GM12878 (cell line): ENCODE measurements at regions of chr5 and their contacts with region 1.

Region 1: GRCh38 chr5:10563945-10564837 is at the start of gene ANKRD33B:
- DNase-seq: no peak
- ATAC-seq: peak; percentile 64
- H3K4me3 ChIP-seq: peak within 1 kb of the TSS; percentile 87
- H3K27ac ChIP-seq: peak within 1 kb of the TSS; percentile 87
- H3K4me1 ChIP-seq: peaks cover 19% of the 10 kb centered on the region
- H3K27me3 ChIP-seq: no peaks in the 10 kb centered on the region
- CTCF ChIP-seq: no peak
- EP300 ChIP-seq: no peak
- POLR2A ChIP-seq: peak; percentile 93
- RAD21 ChIP-seq: peak; percentile 16; the same call in 1 of the 2 replicates
- polyA plus RNA-seq, gene ANKRD33B: 5.9 to 6.1 TPM

Region 2: DNA sequence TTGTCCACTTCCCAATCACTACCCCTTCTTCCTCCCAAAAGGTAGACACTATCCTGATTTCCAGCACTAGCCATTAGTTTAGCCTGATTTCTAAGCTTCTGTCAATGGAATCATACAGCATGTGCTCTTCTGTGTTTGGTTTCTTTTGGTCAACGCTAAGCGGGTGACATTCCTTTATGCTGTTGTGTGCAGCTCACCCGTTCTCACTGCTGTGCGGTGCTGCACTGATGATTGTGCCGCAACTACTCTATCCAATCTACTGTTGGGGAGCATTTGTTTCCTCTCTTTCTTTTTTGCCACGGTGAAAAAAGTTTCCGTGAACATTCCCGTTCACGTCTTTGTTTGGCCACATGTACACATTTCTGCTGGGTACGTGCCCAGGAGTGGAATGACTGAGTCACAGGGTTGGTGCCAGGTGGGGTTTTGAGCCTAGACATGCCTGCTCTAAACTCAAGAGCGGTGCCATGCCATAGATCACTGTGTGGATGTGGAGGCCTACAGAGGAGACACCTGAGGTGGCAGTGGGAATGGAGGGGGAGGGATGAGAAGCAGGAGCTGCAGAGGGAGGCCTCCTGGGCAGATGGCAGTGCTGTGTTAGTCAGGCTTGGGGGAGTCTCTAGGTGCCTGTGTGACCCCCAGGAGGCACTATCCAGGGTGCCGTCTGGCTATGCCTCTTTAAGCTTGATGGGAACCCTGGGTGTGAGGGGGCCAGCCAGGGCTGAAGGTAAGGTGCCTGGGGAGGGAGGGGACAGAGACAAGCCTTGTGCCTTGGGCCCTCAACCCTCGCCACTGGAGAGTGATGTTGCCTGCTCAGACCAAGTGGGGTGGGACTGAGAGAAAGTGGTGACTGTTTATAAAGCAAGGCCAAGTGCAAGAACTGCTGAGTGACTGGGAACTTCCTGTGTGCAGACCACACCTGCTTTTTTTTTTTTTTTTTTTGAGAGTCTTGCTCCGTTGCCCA is 11.7 kb before region 1 on chr5:
- CTCF ChIA-PET with region 1: interaction called, 3 read pairs
- POLR2A ChIA-PET with region 1: interaction called, 4 read pairs
- RAD21 ChIA-PET with region 1: interaction called, 4 read pairs
- SMC1A ChIA-PET with region 1: interaction called, 10 read pairs
- in situ Hi-C with region 1: no loop called
- intact Hi-C with region 1: no loop called
- DNase-seq: no peak
- ATAC-seq: peak; percentile 78
- H3K4me3 ChIP-seq: no peak overlapping the region
- H3K27ac ChIP-seq: no peak overlapping the region
- H3K4me1 ChIP-seq: peaks cover 19% of the 10 kb centered on the region
- H3K27me3 ChIP-seq: no peaks in the 10 kb centered on the region
- CTCF ChIP-seq: no peak
- EP300 ChIP-seq: no peak
- POLR2A ChIP-seq: peak; percentile 53; the same call in 1 of the 2 replicates
- RAD21 ChIP-seq: no peak

Region 3: GRCh38 chr5:10590226-10590999 is 26.2 kb after region 1 on chr5:
- CTCF ChIA-PET with region 1: interaction called, 4 read pairs
- POLR2A ChIA-PET with region 1: interaction called, 20 read pairs
- RAD21 ChIA-PET with region 1: interaction called, 8 read pairs
- SMC1A ChIA-PET with region 1: interaction called, 8 read pairs
- in situ Hi-C with region 1: no loop called
- intact Hi-C with region 1: no loop called
- DNase-seq: no peak
- ATAC-seq: peak; percentile 27; the same call in 2 of the 3 replicates
- H3K4me3 ChIP-seq: no peak overlapping the region
- H3K27ac ChIP-seq: peak overlapping the region; percentile 28
- H3K4me1 ChIP-seq: peaks cover 79% of the 10 kb centered on the region
- H3K27me3 ChIP-seq: no peaks in the 10 kb centered on the region
- CTCF ChIP-seq: no peak
- EP300 ChIP-seq: no peak
- POLR2A ChIP-seq: no peak
- RAD21 ChIP-seq: no peak

Region 4: GRCh38 chr5:10621832-10622231 is 57.6 kb after region 1 on chr5:
- CTCF ChIA-PET with region 1: interaction called, 62 read pairs
- POLR2A ChIA-PET with region 1: interaction called, 16 read pairs
- RAD21 ChIA-PET with region 1: interaction called, 51 read pairs
- SMC1A ChIA-PET with region 1: interaction called, 71 read pairs
- in situ Hi-C with region 1: no loop called
- intact Hi-C with region 1: loop called (anchors 1 kb)
- DNase-seq: no peak
- ATAC-seq: peak; percentile 17; the same call in 2 of the 3 replicates
- H3K4me3 ChIP-seq: no peak overlapping the region
- H3K27ac ChIP-seq: peak overlapping the region; percentile 47
- H3K4me1 ChIP-seq: peaks cover 27% of the 10 kb centered on the region
- H3K27me3 ChIP-seq: no peaks in the 10 kb centered on the region
- CTCF ChIP-seq: no peak
- EP300 ChIP-seq: no peak
- POLR2A ChIP-seq: no peak
- RAD21 ChIP-seq: no peak

Region 5: GRCh38 chr5:10684303-10685086 is 120.3 kb after region 1 on chr5:
- CTCF ChIA-PET with region 1: interaction called, 8 read pairs
- POLR2A ChIA-PET with region 1: no interaction called
- RAD21 ChIA-PET with region 1: interaction called, 5 read pairs
- SMC1A ChIA-PET with region 1: interaction called, 13 read pairs
- in situ Hi-C with region 1: no loop called
- intact Hi-C with region 1: loop called (anchors 2 kb)
- DNase-seq: no peak
- ATAC-seq: peak; percentile 76
- H3K4me3 ChIP-seq: 0 out of 2 replicates have a peak overlapping the region, but pooled peaks have one; percentile 17
- H3K27ac ChIP-seq: peak overlapping the region; percentile 88
- H3K4me1 ChIP-seq: peaks cover 23% of the 10 kb centered on the region
- H3K27me3 ChIP-seq: no peaks in the 10 kb centered on the region
- CTCF ChIP-seq: no peak
- EP300 ChIP-seq: no peak
- POLR2A ChIP-seq: no peak
- RAD21 ChIP-seq: no peak

Region 6: DNA sequence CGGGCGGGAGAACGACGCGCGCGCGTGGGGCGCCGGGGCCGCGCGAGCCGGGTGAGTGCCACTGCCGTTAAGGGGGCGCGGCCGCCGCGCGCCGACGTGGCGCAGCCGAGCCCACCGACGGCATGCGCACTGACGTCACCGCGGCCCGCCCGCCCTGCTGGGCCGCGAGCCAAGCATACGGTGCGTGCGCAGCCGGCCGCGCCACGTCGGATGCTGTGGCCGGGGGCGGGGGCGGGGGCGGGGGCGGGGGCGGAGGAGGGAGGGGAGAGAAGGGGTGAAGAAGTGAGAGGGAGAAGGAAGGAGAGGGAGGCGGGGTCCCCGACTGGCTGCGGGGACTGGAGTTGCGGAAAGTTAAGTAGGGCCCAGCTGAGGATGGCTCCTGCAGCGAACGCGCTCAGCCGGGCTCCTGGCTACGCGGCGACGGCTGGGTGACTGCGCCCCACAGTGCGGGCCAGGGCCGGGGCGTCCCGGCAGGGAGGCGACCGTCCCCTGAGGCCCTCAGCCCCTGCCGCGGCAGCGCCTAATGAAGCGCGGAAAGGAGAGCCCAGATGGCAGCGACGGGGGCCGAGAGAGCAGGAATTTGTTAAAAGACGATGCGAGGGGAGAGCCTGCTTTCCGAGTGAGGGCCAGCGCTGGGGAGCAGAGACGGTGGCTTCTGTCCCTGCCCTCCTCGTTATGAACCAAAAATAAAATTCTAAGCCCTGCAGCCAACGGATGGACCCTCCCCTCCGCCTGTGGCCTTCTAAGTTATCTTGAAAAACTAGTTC is 197.2 kb after region 1 on chr5 and contains the start of gene DAP:
- CTCF ChIA-PET with region 1: no interaction called
- POLR2A ChIA-PET with region 1: no interaction called
- RAD21 ChIA-PET with region 1: interaction called, 3 read pairs
- SMC1A ChIA-PET with region 1: no interaction called
- in situ Hi-C with region 1: no loop called
- intact Hi-C with region 1: loop called (anchors 2 kb)
- DNase-seq: peak; percentile 63
- ATAC-seq: peak; percentile 71
- H3K4me3 ChIP-seq: peak within 1 kb of the TSS; percentile 91
- H3K27ac ChIP-seq: peak within 1 kb of the TSS; percentile 82
- H3K4me1 ChIP-seq: peaks cover 13% of the 10 kb centered on the region
- H3K27me3 ChIP-seq: no peaks in the 10 kb centered on the region
- CTCF ChIP-seq: no peak
- EP300 ChIP-seq: no peak
- POLR2A ChIP-seq: peak; percentile 87
- RAD21 ChIP-seq: no peak
- polyA plus RNA-seq, gene DAP: 12.9 to 18.1 TPM